Esophagus squamous epithelium (tissue), 5 donors: ENCODE measurements at regions of chr9 and their contacts with region 1.

Region 1: GRCh38 chr9:5593904-5594303 is 35.0 kb upstream of the RIC1 start:
- DNase-seq: no peak
- H3K4me3 ChIP-seq: no peak overlapping the region
- H3K27ac ChIP-seq: no peak overlapping the region
- H3K4me1 ChIP-seq: peaks cover 0 to 12% (median 0%) of the 10 kb centered on the region in 3 donors
- H3K27me3 ChIP-seq: no peaks in the 10 kb centered on the region
- CTCF ChIP-seq: no peak
- POLR2A ChIP-seq: no peak

Region 2: DNA sequence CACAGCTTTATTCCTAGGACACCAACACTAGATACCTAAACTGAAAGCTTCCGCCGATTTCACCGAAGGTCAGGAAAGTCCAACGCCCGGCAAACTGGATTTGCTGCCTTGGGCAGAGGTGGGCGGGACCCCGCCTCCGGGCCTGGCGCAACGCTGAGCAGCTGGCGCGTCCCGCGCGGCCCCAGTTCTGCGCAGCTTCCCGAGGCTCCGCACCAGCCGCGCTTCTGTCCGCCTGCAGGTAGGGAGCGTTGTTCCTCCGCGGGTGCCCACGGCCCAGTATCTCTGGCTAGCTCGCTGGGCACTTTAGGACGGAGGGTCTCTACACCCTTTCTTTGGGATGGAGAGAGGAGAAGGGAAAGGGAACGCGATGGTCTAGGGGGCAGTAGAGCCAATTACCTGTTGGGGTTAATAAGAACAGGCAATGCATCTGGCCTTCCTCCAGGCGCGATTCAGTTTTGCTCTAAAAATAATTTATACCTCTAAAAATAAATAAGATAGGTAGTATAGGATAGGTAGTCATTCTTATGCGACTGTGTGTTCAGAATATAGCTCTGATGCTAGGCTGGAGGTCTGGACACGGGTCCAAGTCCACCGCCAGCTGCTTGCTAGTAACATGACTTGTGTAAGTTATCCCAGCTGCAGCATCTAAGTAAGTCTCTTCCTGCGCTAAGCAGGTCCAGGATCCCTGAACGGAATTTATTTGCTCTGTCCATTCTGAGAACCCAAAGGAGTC is 143.4 kb before region 1 on chr9 and contains the start of gene CD274:
- intact Hi-C with region 1: loop called (anchors 5 kb)
- DNase-seq: peak; percentile 29
- H3K4me3 ChIP-seq: peak within 1 kb of the TSS; percentile 35 to 72 (median 54)
- H3K27ac ChIP-seq: peak within 1 kb of the TSS; percentile 83 to 95 (median 90)
- H3K4me1 ChIP-seq: peaks cover 12 to 74% (median 25%) of the 10 kb centered on the region in 3 donors
- H3K27me3 ChIP-seq: no peaks in the 10 kb centered on the region
- CTCF ChIP-seq: peak; percentile 51 to 90 (median 78)
- POLR2A ChIP-seq: peak in 1 of 4 donors; percentile 56
- total RNA-seq, gene CD274: 1.3 to 3.5 (median 2.2) TPM